ENCODE measurements at regions of chr1 and their contacts with region 1.

Region 1: DNA sequence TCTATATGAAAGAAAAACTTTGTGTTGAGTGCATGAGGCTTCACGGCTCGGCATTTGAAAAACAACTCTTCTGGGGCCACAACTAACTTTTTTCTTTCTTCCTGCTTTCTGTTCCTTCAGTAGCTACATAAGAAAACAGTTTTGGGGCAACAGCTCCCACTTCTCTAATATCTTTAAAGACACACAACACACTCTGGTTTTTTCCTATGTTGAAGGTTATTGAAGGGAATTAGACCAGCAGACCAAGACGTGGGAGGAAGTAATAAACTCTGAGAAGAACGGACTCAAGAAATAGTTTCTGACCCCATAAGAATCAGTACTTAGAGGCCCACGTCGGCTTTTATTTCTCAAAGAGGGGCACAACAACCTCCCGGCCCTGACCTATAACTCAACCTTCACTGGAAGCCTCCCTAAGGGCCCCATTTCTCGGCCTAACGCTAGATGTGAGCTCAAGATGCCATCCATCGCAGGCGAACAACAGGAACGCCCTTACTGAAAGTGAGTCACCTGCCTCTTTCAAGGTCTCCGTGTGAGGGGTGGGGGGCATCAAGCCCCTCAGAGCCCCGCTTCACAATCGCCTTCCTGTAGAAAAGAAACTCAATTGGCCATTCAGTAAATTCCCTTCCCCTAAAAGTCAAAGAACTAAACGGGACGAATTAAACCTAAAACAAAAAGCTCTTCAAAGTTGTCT is 844 bp downstream of the ZMYM6 start:
- DNase-seq: peak; percentile 30 to 69 (median 47)
- H3K4me3 ChIP-seq: peak overlapping the region; percentile 15 to 78 (median 66)
- H3K27ac ChIP-seq: peak overlapping the region; percentile 74 to 98 (median 92)
- H3K4me1 ChIP-seq: peaks cover 17 to 30% of the 10 kb centered on the region in 2 donors
- H3K27me3 ChIP-seq: no peaks in the 10 kb centered on the region
- CTCF ChIP-seq: no peak
- POLR2A ChIP-seq: no peak

Region 2: GRCh38 chr1:35180776-35181374 is 150.0 kb after region 1 on chr1:
- intact Hi-C with region 1: loop called in 1 of 2 experiments (anchors 10 kb)
- DNase-seq: no peak
- H3K4me3 ChIP-seq: no peak overlapping the region
- H3K27ac ChIP-seq: no peak overlapping the region
- H3K4me1 ChIP-seq: peaks cover 0 to 38% of the 10 kb centered on the region in 2 donors
- H3K27me3 ChIP-seq: no peaks in the 10 kb centered on the region
- CTCF ChIP-seq: no peak
- POLR2A ChIP-seq: no peak

Region 3: DNA sequence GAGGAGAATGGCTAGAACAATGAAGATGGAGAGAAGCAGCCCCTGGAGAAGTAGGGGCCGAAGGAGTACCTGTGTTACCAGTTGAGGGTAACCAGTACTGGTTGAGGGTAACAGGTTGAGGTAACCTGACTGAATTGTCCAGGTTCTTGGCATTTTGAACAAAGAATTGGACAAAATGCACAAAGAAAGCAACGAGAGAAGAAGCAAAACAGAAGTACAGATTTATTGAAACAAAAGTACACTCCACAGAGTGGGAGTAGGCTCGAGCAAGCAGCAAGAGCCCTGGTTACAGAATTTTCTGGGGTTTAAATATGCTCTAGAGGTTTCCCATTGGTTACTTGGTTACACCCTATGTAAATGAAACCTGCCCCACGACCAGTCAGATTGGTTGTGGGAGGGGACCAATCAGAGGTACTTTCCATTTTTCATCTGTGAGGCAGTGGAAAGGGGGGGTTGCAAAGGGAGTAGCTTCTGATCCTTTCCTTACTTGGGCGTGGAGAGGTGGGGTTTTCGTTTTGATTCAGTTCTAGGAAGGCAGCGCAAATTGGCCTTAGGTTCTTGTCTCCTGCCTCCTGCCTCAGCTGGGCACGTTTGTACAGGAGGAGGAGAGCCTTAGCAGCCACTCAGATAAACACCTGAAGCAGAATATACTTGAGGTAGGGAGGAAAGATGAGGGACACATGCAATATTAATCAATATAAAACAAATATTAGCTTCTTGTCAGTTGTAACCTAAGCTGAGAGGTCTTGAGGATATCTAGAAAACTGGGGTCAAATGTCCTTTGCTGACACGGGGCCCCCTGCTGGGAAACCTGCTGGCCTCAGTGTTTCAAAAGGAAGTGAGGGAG is 1381.0 kb after region 1 on chr1:
- intact Hi-C with region 1: no loop called
- DNase-seq: no peak
- H3K4me3 ChIP-seq: no peak overlapping the region
- H3K27ac ChIP-seq: no peak overlapping the region
- H3K4me1 ChIP-seq: no peaks in the 10 kb centered on the region
- H3K27me3 ChIP-seq: no peaks in the 10 kb centered on the region
- CTCF ChIP-seq: no peak
- POLR2A ChIP-seq: no peak